Activated CD8-positive, alpha-beta memory T cell treated with anti-CD3 and anti-CD28 coated beads, Interleukin-2, amount 10 ng/mL, durations not matched to agents 7 days and 5 days (primary cell): ENCODE measurements at regions of chr15 and their contacts with region 1.

Region 1: DNA sequence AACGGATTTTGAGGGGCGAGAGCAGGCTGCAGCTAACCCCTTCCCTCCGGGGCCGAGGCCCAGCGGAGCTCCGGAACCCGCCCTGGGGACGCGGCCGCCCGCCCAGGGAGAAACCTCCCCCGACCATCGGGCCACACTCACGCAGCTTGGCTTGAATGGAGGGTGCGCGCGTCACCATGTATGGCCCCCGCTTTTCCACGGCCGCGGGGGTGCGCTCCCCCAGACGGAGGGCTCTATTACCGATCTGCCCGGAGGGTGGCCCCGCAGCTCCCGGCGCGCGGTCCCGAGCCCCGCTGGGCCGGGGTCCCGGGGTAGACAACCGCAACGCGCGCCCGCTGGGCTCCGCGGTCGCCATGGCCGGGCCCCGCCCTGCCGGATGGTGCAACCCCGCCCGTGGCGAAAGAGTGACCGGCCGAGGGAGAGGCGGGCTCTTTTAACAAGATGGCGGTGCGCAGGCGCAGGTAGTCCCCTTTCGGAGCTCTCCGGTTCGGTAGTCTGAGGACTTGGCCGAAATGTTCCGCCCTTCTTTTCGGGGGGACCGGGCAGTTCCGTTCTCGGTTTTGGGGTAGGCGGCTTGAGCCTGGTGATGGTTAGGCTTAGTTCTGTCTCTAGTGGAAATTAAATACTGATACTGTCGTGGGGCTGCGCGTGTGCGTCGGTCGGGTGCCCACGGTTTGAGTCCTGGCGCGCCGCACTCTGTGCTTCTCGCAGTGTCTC is at the start of gene FAM219B:
- DNase-seq: peak; percentile 90
- ATAC-seq: peak; percentile 93
- H3K4me3 Mint-ChIP-seq: peak within 1 kb of the TSS; percentile 93
- H3K27ac Mint-ChIP-seq: peak within 1 kb of the TSS; percentile 95
- H3K4me1 Mint-ChIP-seq: peaks cover 34% of the 10 kb centered on the region
- H3K27me3 Mint-ChIP-seq: no peaks in the 10 kb centered on the region
- total RNA-seq, gene FAM219B: 95.2 to 119 TPM

Region 2: DNA sequence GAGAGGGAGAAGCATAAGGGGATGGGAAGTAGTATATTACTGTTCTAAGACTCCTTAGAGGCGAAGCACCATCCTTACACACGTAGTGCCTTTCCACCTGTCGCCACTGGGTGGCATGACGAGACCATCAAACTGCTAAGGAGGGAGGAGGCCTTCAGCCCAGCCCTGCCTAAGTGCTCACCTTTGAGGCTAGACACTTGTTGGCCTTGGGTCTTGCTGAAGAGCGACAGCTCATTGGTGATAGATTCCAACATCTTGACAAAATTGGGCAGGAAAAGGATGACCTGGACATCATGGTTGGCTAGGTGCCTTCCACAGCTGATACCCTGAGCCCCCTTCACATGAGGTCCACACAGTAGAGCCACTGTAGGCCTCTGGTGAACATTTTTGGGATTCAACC is 271.4 kb before region 1 on chr15:
- CTCF ChIA-PET with region 1: interaction called, 10 read pairs
- DNase-seq: peak; percentile 84
- ATAC-seq: peak; percentile 90
- H3K4me3 Mint-ChIP-seq: no peak overlapping the region
- H3K27ac Mint-ChIP-seq: no peak overlapping the region
- H3K4me1 Mint-ChIP-seq: no peaks in the 10 kb centered on the region
- H3K27me3 Mint-ChIP-seq: no peaks in the 10 kb centered on the region

Region 3: GRCh38 chr15:74787251-74788041 is 119.2 kb before region 1 on chr15:
- CTCF ChIA-PET with region 1: interaction called, 14 read pairs
- DNase-seq: peak; percentile 99
- ATAC-seq: peak; percentile 67
- H3K4me3 Mint-ChIP-seq: peak overlapping the region; percentile 79
- H3K27ac Mint-ChIP-seq: peak overlapping the region; percentile 98
- H3K4me1 Mint-ChIP-seq: peaks cover 67% of the 10 kb centered on the region
- H3K27me3 Mint-ChIP-seq: no peaks in the 10 kb centered on the region

Region 4: GRCh38 chr15:74857082-74857655 is 49.4 kb before region 1 on chr15:
- CTCF ChIA-PET with region 1: interaction called, 66 read pairs
- DNase-seq: no peak
- ATAC-seq: no peak
- H3K4me3 Mint-ChIP-seq: no peak overlapping the region
- H3K27ac Mint-ChIP-seq: peak overlapping the region; percentile 91
- H3K4me1 Mint-ChIP-seq: peaks cover 43% of the 10 kb centered on the region
- H3K27me3 Mint-ChIP-seq: no peaks in the 10 kb centered on the region

Region 5: DNA sequence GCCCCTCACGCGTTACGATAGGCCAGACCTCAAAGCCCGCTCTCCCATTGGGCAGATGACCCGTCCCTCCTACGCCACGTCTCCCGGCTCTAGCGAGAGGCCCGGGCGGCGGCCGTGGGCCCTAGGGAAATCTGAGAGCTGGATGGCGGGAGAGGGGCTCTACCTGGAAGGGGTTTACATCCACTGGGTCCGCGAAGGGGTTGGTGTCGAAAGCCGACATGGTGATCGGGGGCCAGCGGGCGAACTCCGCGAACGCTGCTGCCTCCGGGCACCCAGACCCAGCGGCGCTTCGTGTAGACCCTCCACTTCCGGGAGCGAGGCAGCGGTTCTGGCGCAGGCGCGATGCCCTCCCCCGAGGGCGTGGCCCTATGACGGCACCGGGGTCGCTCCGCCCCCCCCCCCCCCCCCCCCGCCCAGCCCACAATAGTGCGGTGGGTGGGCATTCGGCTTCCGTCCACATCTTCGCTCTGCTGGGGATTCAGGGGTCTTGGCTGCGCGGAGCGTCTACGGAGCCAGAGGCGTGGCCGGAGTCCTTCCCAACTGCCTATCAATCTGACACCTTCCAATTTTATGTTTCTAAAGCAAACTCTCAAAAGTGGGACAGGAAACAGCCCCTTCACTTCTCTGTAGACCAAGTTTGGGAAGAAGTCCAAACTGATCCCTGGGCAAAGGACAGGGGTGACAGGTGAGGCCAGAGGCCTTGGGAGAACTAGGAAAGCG is 33.4 kb before region 1 on chr15 and contains the start of gene SCAMP2:
- CTCF ChIA-PET with region 1: interaction called, 67 read pairs
- DNase-seq: peak; percentile 97
- ATAC-seq: peak; percentile 93
- H3K4me3 Mint-ChIP-seq: peak within 1 kb of the TSS; percentile 94
- H3K27ac Mint-ChIP-seq: peak within 1 kb of the TSS; percentile 94
- H3K4me1 Mint-ChIP-seq: peaks cover 46% of the 10 kb centered on the region
- H3K27me3 Mint-ChIP-seq: no peaks in the 10 kb centered on the region
- total RNA-seq, gene SCAMP2: 108 to 115 TPM

Region 6: DNA sequence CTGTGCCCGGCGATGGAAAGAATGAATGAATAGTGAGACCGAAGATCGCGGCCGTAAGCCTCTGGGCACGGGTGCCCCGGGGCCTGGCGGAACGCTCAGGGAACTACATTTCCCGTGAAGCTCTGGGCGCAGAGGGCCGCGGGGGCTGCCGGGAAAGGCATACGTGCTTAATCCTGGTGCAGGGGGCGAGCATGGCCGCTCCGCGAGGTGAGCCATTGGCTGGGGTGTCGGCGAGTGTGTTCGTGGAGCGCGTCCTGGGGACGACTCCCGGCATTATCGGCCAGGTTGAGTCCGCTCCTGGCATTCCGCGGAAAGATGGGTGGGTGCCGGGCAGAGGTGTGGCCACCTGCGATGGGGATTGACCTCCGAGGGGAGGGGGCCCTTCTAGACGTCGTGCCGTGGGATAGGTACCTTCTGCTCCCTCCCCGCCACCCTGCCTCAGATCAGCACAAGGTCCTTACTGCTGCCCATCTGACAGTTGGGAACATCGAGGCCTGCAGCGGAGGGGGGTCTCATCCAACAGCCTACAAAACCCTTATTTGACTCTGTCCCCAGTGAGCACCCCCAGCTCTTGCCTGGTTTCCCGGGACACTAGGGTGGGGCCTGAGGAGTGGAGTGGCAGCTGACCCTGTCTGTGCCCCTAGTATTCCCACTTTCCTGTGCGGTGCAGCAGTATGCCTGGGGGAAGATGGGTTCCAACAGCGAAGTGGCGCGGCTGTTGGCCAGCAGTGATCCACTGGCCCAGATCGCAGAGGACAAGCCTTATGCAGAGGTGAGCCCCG is 16.5 kb before region 1 on chr15 and contains the start of gene MPI:
- CTCF ChIA-PET with region 1: interaction called, 43 read pairs
- DNase-seq: peak; percentile 93
- ATAC-seq: peak; percentile 96
- H3K4me3 Mint-ChIP-seq: peak within 1 kb of the TSS; percentile 93
- H3K27ac Mint-ChIP-seq: peak within 1 kb of the TSS; percentile 93
- H3K4me1 Mint-ChIP-seq: peaks cover 47% of the 10 kb centered on the region
- H3K27me3 Mint-ChIP-seq: no peaks in the 10 kb centered on the region
- total RNA-seq, gene MPI: 52.8 to 59.0 TPM

Region 7: GRCh38 chr15:74937596-74938296 is 31.1 kb after region 1 on chr15 and contains the start of gene COX5A:
- CTCF ChIA-PET with region 1: interaction called, 12 read pairs
- DNase-seq: peak; percentile 95
- ATAC-seq: peak; percentile 96
- H3K4me3 Mint-ChIP-seq: peak within 1 kb of the TSS; percentile 92
- H3K27ac Mint-ChIP-seq: peak within 1 kb of the TSS; percentile 93
- H3K4me1 Mint-ChIP-seq: peaks cover 34% of the 10 kb centered on the region
- H3K27me3 Mint-ChIP-seq: no peaks in the 10 kb centered on the region
- total RNA-seq, gene COX5A: 322 to 326 TPM